Right ventricle myocardium inferior (tissue), 1 donor: ENCODE measurements at regions of chr20 and their contacts with region 1.

Region 1: DNA sequence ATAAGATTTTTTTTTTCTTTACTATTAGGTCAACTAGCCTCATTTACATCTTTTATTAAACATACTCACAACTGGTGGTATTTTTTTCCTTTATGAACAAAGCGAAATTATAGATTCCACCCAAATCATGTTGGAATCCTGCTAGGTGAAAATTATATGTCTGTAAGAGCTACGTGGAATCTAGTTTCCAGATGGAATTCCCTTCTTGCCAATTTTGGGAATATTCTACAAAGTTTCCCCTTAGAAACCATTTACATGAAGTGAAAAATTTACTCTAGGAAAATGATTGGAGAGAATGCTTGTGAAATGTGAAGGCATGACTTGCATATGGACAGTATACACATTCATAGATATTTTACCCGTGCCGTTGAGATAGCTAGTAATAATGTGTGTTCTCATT is 1111.3 kb downstream of the KIF16B start:
- DNase-seq: no peak
- ATAC-seq: no peak

Region 2: GRCh38 chr20:16966276-16966880 is 1504.4 kb after region 1 on chr20:
- intact Hi-C with region 1: loop called (anchors 10 kb)
- DNase-seq: no peak
- ATAC-seq: no peak